Left ventricle myocardium superior (tissue), 1 donor: ENCODE measurements at regions of chr5 and their contacts with region 1.

Region 1: DNA sequence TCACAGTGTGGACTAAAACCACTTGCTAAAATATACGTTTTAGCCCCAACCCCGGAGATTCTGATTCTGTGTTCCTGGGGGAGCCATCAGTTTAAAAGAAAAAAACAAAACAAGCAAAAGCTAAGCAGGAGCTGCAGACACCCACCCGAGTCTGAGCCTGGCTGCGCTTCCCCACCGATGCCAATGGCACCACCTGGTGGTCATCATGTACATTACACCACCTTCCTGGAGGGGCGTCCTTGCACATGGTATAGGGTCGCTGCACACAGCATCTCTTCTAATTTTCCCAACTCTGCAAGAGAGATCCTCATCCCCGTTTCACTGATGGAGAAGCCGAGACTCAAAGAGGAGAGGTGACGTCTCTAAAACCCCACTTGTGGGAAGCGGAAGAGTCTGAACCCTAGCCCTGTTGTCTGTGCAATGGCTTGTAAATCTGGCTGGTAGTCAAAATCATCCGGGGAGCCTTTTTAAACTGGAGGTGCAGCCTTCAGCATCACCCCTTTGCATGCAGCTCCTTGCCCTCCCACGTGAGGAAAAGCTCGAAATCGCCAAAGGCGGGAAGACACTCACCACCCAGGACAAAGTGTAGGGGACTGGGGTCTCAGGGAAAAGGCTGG is 23.1 kb upstream of the CNOT6 start:
- DNase-seq: peak; percentile 56
- ATAC-seq: peak; percentile 81

Region 2: DNA sequence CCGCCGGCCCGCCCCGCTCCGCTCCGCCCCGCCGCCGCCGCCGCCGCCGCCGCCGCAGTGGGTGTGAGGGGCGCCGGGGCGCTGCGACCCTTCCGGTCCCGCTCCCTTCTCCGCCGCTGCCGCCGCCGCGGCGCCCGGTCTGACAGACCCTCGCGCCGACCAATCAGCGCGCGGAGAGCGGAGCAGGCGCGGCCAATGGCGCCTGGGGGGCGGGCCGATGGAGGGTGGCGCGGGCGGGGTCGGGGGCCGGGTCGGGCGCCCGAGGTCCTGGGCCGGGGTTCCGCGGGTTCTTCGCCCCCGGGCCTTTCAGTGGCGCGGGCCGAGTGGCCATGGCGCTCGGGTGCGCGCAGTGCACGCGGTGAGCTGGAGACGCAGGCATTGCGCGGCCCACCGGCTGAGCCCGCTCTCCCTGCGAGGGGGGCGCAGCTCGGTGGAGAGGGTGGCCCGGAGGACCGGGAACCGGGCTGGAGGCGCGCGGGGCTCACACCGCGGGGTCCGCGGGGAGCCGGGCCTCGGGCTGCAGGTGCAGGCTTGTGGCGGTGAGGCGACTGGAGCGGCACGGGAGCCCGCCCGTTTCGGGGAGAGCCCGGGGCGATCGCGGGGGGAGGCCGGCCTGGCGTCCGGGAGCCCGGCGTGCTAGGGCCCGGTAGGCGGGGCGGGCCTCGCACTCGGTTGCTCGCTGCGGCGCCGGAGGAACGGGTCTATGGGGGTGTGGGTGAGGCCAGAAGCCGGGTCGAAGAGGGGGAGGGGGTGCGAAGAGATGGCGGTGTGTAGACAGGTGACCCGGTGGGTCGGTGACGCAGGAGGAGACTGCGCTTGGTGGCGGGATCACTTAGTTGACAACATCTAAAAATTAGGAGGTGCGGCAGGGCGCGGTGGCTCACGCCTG is 178.9 kb before region 1 on chr5 and contains the start of gene MAPK9:
- intact Hi-C with region 1: loop called (anchors 5 kb)
- DNase-seq: peak; percentile 94
- ATAC-seq: peak; percentile 93
- total RNA-seq, gene MAPK9: 46.5 TPM